Activated CD8-positive, alpha-beta memory T cell treated with anti-CD3 and anti-CD28 coated beads, Interleukin-2, amount 10 ng/mL, durations not matched to agents 7 days and 5 days (primary cell): ENCODE measurements at regions of chr11 and their contacts with region 1.

Region 1: DNA sequence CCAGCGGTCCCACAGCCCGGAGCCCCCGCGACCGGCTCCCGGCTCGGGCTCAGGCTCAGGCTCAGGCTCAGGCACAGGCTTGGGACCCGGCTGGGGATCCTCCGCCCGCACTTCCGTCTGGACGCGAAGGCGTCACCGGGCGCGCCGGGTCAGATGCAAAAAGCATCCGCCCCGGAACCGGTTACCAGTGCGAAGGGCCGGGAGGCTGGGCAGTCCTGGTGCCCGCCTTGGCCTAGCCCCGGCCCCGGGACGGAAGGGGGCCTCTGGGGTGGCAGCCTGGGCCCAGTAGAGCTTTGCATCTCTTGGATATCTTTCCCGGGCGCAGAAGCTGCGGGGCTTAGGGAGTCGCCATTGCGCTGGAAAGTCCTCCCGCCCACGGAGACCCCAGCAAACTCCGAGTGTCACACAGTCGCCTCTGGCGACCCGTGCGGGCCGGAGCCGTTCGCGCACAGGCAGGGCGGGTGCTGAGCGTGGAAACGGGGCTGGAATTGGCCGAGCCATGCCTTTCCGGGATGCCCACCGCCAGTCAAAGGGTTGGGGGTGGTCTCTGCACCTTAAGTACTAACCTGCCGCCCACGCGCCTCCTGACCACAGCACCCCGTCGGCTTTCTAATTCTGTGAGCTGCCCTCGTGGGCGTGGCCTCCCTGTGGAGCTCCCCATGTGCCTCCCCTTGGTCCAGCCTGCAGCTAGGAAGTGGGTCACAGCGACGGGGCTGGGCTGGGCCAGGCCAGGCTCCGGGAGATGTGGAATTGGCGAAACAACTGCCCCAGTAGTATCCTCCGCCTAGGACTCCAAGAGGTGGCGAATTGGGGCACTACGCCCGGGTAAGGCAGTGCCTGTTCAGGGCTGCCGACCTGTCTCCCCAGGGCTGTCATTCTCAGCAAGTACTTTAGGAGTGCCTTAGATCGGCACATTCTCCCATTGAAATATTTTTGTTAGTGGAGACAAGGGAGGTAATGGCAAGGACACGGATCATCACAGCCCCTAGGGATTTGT is at the start of gene TMEM9B:
- DNase-seq: peak; percentile 92
- ATAC-seq: peak; percentile 89
- H3K4me3 Mint-ChIP-seq: peak within 1 kb of the TSS; percentile 98
- H3K27ac Mint-ChIP-seq: peak within 1 kb of the TSS; percentile 97
- H3K4me1 Mint-ChIP-seq: peaks cover 32% of the 10 kb centered on the region
- H3K27me3 Mint-ChIP-seq: no peaks in the 10 kb centered on the region
- total RNA-seq, gene TMEM9B: 22.9 to 30.1 TPM

Region 2: GRCh38 chr11:8878771-8879170 is 85.9 kb before region 1 on chr11:
- CTCF ChIA-PET with region 1: no interaction called
- DNase-seq: no peak
- ATAC-seq: no peak
- H3K4me3 Mint-ChIP-seq: no peak overlapping the region
- H3K27ac Mint-ChIP-seq: no peak overlapping the region
- H3K4me1 Mint-ChIP-seq: peaks cover 5% of the 10 kb centered on the region
- H3K27me3 Mint-ChIP-seq: peaks cover 31% of the 10 kb centered on the region

Region 3: GRCh38 chr11:8911029-8911826 is 53.4 kb before region 1 on chr11 and contains the start of gene AKIP1:
- CTCF ChIA-PET with region 1: interaction called, 107 read pairs
- DNase-seq: peak; percentile 89
- ATAC-seq: peak; percentile 85
- H3K4me3 Mint-ChIP-seq: peak within 1 kb of the TSS; percentile 86
- H3K27ac Mint-ChIP-seq: peak within 1 kb of the TSS; percentile 78
- H3K4me1 Mint-ChIP-seq: peaks cover 52% of the 10 kb centered on the region
- H3K27me3 Mint-ChIP-seq: peaks cover 4% of the 10 kb centered on the region
- total RNA-seq, gene AKIP1: 29.8 to 34.9 TPM

Region 4: GRCh38 chr11:8948886-8949285 is 15.7 kb before region 1 on chr11:
- CTCF ChIA-PET with region 1: interaction called, 11 read pairs
- DNase-seq: no peak
- ATAC-seq: no peak
- H3K4me3 Mint-ChIP-seq: no peak overlapping the region
- H3K27ac Mint-ChIP-seq: no peak overlapping the region
- H3K4me1 Mint-ChIP-seq: peaks cover 4% of the 10 kb centered on the region
- H3K27me3 Mint-ChIP-seq: peaks cover 6% of the 10 kb centered on the region

Region 5: GRCh38 chr11:9015677-9016076 is 51.1 kb after region 1 on chr11:
- CTCF ChIA-PET with region 1: interaction called, 11 read pairs
- DNase-seq: peak; percentile 73
- ATAC-seq: peak; percentile 87
- H3K4me3 Mint-ChIP-seq: no peak overlapping the region
- H3K27ac Mint-ChIP-seq: no peak overlapping the region
- H3K4me1 Mint-ChIP-seq: peaks cover 18% of the 10 kb centered on the region
- H3K27me3 Mint-ChIP-seq: peaks cover 19% of the 10 kb centered on the region